Activated CD8-positive, alpha-beta T cell treated with anti-CD3 and anti-CD28 coated beads for 36 hours (primary cell): ENCODE measurements at regions of chr7 and their contacts with region 1.

Region 1: GRCh38 chr7:128830231-128831177 is at the start of gene FLNC:
- DNase-seq: peak; percentile 59
- ATAC-seq: peak; percentile 59
- H3K4me3 Mint-ChIP-seq: peak within 1 kb of the TSS; percentile 50
- H3K27ac Mint-ChIP-seq: no peak within 1 kb of the TSS
- H3K4me1 Mint-ChIP-seq: peaks cover 15% of the 10 kb centered on the region
- H3K27me3 Mint-ChIP-seq: peaks cover 38% of the 10 kb centered on the region
- CTCF ChIP-seq: no peak
- total RNA-seq, gene FLNC: 0.14 to 0.16 TPM

Region 2: GRCh38 chr7:128799451-128799850 is 31.1 kb before region 1 on chr7:
- CTCF ChIA-PET with region 1: no interaction called
- POLR2A ChIA-PET with region 1: no interaction called
- intact Hi-C with region 1: no loop called
- DNase-seq: no peak
- ATAC-seq: no peak
- H3K4me3 Mint-ChIP-seq: no peak overlapping the region
- H3K27ac Mint-ChIP-seq: no peak overlapping the region
- H3K4me1 Mint-ChIP-seq: no peaks in the 10 kb centered on the region
- H3K27me3 Mint-ChIP-seq: no peaks in the 10 kb centered on the region
- CTCF ChIP-seq: no peak

Region 3: DNA sequence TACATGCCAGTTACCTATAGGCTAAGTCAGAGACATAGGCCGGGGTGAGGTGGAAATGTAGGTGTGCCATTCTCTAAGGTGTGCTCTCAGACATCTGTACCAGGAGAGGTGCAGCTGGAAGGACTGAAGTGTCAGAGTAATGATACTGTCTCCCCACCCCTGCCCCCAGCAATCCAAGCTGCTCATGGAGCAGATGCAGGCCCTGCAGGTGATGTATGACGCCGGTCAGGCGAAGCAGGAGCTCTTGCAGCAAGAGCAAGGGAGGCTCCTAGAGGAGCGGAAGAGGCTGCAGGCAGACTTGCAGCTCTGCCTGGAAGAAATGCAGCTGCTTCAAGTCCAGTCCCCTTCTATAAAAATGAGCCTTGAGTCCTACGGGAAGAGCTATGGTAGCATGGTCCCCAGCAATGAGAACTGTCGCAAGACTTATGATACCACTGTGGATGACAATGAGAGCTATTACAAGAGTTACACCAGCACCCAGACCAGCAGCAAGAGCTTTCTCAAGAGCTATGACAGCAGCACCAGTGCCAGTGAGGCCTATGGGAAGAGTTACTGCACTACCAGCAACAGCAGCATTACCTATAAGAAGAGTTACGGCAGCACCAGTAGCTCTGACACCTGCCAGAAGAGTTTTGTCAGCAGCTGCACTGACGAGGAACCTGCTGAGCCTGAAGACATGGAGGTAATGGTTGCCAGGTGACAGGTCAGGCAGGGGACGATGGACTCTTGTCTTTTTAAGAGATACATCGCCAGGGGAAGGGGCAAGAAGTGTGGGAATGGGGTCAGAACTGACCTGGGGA is 18.7 kb before region 1 on chr7:
- CTCF ChIA-PET with region 1: no interaction called
- POLR2A ChIA-PET with region 1: no interaction called
- intact Hi-C with region 1: no loop called
- DNase-seq: no peak
- ATAC-seq: no peak
- H3K4me3 Mint-ChIP-seq: no peak overlapping the region
- H3K27ac Mint-ChIP-seq: no peak overlapping the region
- H3K4me1 Mint-ChIP-seq: no peaks in the 10 kb centered on the region
- H3K27me3 Mint-ChIP-seq: no peaks in the 10 kb centered on the region
- CTCF ChIP-seq: no peak

Region 4: GRCh38 chr7:128841921-128842651 is 11.6 kb after region 1 on chr7:
- CTCF ChIA-PET with region 1: interaction called, 22 read pairs
- POLR2A ChIA-PET with region 1: no interaction called
- intact Hi-C with region 1: no loop called
- DNase-seq: peak; percentile 75
- ATAC-seq: peak; percentile 84
- H3K4me3 Mint-ChIP-seq: no peak overlapping the region
- H3K27ac Mint-ChIP-seq: no peak overlapping the region
- H3K4me1 Mint-ChIP-seq: peaks cover 9% of the 10 kb centered on the region
- H3K27me3 Mint-ChIP-seq: no peaks in the 10 kb centered on the region
- CTCF ChIP-seq: peak; percentile 96

Region 5: DNA sequence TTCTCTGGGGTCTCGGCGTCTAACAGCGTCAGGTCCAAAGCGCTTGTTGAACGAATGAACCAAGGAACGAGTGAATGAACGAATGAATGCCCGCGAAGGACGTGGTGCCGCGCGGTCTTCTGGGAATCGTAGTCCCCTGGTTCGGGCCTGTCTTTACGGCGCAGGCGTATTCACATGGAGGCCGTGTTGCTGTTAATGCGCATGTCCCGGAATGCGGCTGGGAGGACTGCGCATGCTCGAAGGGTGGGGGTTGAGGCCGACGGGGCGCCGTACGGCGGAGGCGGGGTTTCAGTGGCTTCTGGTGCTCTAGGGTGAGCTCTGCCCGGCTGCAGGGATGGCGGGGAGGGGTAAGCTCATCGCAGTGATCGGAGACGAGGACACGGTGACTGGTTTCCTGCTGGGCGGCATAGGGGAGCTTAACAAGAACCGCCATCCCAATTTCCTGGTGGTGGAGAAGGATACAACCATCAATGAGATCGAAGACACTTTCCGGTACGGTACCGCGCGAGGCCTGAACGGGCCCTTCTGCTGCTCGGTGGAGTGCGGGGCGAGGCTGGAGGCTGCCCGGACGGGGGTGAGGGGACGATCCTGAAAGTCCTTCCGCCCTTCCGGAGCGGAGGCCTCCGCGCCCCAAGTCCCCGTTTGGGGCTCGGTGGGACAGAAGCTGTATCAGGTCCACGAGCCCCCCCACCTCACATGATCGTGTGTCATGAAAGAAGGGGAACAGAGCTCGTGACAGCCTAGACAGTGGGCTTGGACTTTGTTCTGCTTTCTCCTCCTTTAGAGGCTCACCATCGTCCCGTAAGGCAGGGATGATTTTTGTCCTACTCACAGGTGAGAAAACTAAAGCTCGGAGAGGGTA is 32.3 kb after region 1 on chr7 and contains the start of gene ATP6V1F:
- CTCF ChIA-PET with region 1: interaction called, 17 read pairs
- POLR2A ChIA-PET with region 1: interaction called, 7 read pairs
- intact Hi-C with region 1: no loop called
- DNase-seq: peak; percentile 99
- ATAC-seq: peak; percentile 93
- H3K4me3 Mint-ChIP-seq: peak within 1 kb of the TSS; percentile 85
- H3K27ac Mint-ChIP-seq: peak within 1 kb of the TSS; percentile 87
- H3K4me1 Mint-ChIP-seq: peaks cover 21% of the 10 kb centered on the region
- H3K27me3 Mint-ChIP-seq: peaks cover under 1% of the 10 kb centered on the region
- CTCF ChIP-seq: no peak
- total RNA-seq, gene ATP6V1F: 109 to 113 TPM